HEK293T (cell line): ENCODE measurements at regions of chr1 and their contacts with region 1.

Region 1: GRCh38 chr1:103106426-103107341 is 1.6 kb downstream of the COL11A1 start:
- DNase-seq: peak; percentile 46

Region 2: GRCh38 chr1:103122983-103123720 is 16.5 kb after region 1 on chr1:
- CTCF ChIA-PET with region 1: interaction called, 22 read pairs
- POLR2A ChIA-PET with region 1: no interaction called
- DNase-seq: no peak

Region 3: GRCh38 chr1:103461161-103462105 is 354.7 kb after region 1 on chr1:
- CTCF ChIA-PET with region 1: interaction called, 15 read pairs
- POLR2A ChIA-PET with region 1: no interaction called
- DNase-seq: peak; percentile 14